Activated naive CD4-positive, alpha-beta T cell treated with anti-CD3 and anti-CD28 coated beads, Interleukin-2, amount 10 ng/mL, durations not matched to agents 7 days and 5 days (primary cell): ENCODE measurements at regions of chr10 and their contacts with region 1.

Region 1: GRCh38 chr10:17430647-17431355 is 23.6 kb downstream of the ST8SIA6 start:
- DNase-seq: peak; percentile 75
- H3K4me3 Mint-ChIP-seq: no peak overlapping the region
- H3K27ac Mint-ChIP-seq: peak overlapping the region; percentile 9
- H3K4me1 Mint-ChIP-seq: peaks cover 63% of the 10 kb centered on the region
- H3K27me3 Mint-ChIP-seq: peaks cover 17% of the 10 kb centered on the region

Region 2: DNA sequence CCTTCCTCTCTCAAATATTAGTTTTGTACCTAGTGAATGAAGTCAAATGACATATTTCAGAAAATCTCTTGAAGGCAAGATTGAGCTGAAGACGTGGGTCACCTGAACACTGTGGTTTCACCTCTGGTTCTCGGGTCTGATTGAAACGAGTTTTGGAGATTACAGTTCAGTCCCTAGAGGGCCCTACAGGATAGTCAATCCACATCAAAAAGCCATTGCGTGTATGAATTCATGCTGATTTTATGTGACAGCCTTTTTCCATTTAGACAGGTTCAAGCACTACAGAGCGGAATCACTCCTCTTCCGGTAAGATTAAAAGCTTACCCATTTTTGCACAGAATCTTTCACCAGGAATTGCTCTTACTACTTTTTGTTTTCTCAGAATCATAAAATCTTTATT is 140.6 kb before region 1 on chr10:
- CTCF ChIA-PET with region 1: interaction called, 14 read pairs
- DNase-seq: peak; percentile 26
- H3K4me3 Mint-ChIP-seq: no peak overlapping the region
- H3K27ac Mint-ChIP-seq: no peak overlapping the region
- H3K4me1 Mint-ChIP-seq: peaks cover 4% of the 10 kb centered on the region
- H3K27me3 Mint-ChIP-seq: peaks cover 18% of the 10 kb centered on the region

Region 3: DNA sequence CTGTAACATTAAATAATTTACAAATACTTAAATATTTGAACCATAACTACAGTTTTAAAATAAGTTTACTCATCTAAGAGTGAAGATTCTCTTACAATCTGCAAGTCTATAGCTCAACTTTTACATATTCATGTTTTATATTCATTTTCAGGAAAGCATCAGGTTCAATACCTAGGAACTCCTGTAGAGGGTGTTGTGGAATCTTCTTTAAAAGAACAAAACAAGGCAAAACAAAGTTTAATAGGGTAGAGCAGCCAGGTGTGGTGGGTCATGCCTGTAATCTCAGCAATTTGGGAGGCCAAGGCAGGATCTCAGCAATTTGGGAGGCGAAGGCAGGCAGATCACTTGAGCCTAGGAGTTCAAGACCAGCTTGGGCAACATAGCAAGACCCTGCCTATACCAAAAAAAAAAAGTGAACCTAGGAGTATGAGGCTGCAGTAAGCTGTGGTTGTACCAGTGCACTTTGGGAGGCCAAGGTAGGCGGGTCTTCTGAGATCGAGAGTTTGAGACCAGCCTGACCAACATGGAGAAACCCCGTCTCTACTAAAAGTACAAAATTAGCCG is 21.5 kb before region 1 on chr10:
- CTCF ChIA-PET with region 1: interaction called, 36 read pairs
- DNase-seq: peak; percentile 24
- H3K4me3 Mint-ChIP-seq: no peak overlapping the region
- H3K27ac Mint-ChIP-seq: peak overlapping the region; percentile 30
- H3K4me1 Mint-ChIP-seq: peaks cover 26% of the 10 kb centered on the region
- H3K27me3 Mint-ChIP-seq: peaks cover 10% of the 10 kb centered on the region

Region 4: GRCh38 chr10:17562614-17563013 is 131.8 kb after region 1 on chr10:
- CTCF ChIA-PET with region 1: no interaction called
- DNase-seq: no peak
- H3K4me3 Mint-ChIP-seq: no peak overlapping the region
- H3K27ac Mint-ChIP-seq: no peak overlapping the region
- H3K4me1 Mint-ChIP-seq: no peaks in the 10 kb centered on the region
- H3K27me3 Mint-ChIP-seq: no peaks in the 10 kb centered on the region